Activated CD4-positive, alpha-beta memory T cell treated with anti-CD3 and anti-CD28 coated beads, Interleukin-2, amount 10 ng/mL, durations not matched to agents 7 days and 5 days (primary cell): ENCODE measurements at regions of chr1 and their contacts with region 1.

Region 1: DNA sequence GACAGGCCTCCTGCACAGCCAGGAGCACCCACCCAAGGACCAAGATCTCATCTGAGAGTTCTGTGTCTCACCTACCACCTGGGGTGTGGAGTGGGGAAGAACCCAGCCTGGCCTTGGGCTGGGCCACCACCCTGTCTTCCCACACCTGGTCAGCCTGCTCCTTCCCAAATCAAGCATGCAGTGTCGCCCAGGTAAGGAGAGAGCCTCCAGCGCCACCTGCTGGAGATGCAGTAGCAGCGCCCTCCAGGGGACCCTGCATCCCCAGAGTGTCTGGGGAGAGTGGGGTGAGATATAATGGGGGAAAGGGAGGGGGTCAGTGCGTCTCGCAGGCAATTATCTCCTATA is 32.3 kb downstream of the KIAA2013 start:
- DNase-seq: peak; percentile 74
- H3K4me3 Mint-ChIP-seq: no peak overlapping the region
- H3K27ac Mint-ChIP-seq: no peak overlapping the region
- H3K4me1 Mint-ChIP-seq: no peaks in the 10 kb centered on the region
- H3K27me3 Mint-ChIP-seq: peaks cover 37% of the 10 kb centered on the region

Region 2: GRCh38 chr1:11784993-11785769 is 108.7 kb before region 1 on chr1:
- CTCF ChIA-PET with region 1: no interaction called
- POLR2A ChIA-PET with region 1: no interaction called
- DNase-seq: peak; percentile 45
- H3K4me3 Mint-ChIP-seq: no peak overlapping the region
- H3K27ac Mint-ChIP-seq: no peak overlapping the region
- H3K4me1 Mint-ChIP-seq: no peaks in the 10 kb centered on the region
- H3K27me3 Mint-ChIP-seq: no peaks in the 10 kb centered on the region

Region 3: GRCh38 chr1:11838349-11839272 is 55.3 kb before region 1 on chr1:
- CTCF ChIA-PET with region 1: interaction called, 20 read pairs
- POLR2A ChIA-PET with region 1: no interaction called
- DNase-seq: peak; percentile 79
- H3K4me3 Mint-ChIP-seq: no peak overlapping the region
- H3K27ac Mint-ChIP-seq: no peak overlapping the region
- H3K4me1 Mint-ChIP-seq: peaks cover 1% of the 10 kb centered on the region
- H3K27me3 Mint-ChIP-seq: no peaks in the 10 kb centered on the region

Region 4: GRCh38 chr1:11862890-11863289 is 31.0 kb before region 1 on chr1:
- CTCF ChIA-PET with region 1: no interaction called
- POLR2A ChIA-PET with region 1: no interaction called
- DNase-seq: no peak
- H3K4me3 Mint-ChIP-seq: no peak overlapping the region
- H3K27ac Mint-ChIP-seq: no peak overlapping the region
- H3K4me1 Mint-ChIP-seq: no peaks in the 10 kb centered on the region
- H3K27me3 Mint-ChIP-seq: peaks cover 50% of the 10 kb centered on the region

Region 5: GRCh38 chr1:11874624-11875023 is 19.3 kb before region 1 on chr1:
- CTCF ChIA-PET with region 1: no interaction called
- POLR2A ChIA-PET with region 1: no interaction called
- DNase-seq: no peak
- H3K4me3 Mint-ChIP-seq: no peak overlapping the region
- H3K27ac Mint-ChIP-seq: no peak overlapping the region
- H3K4me1 Mint-ChIP-seq: no peaks in the 10 kb centered on the region
- H3K27me3 Mint-ChIP-seq: peaks cover 14% of the 10 kb centered on the region